ENCODE measurements at regions of chr12 and their contacts with region 1.

Region 1: DNA sequence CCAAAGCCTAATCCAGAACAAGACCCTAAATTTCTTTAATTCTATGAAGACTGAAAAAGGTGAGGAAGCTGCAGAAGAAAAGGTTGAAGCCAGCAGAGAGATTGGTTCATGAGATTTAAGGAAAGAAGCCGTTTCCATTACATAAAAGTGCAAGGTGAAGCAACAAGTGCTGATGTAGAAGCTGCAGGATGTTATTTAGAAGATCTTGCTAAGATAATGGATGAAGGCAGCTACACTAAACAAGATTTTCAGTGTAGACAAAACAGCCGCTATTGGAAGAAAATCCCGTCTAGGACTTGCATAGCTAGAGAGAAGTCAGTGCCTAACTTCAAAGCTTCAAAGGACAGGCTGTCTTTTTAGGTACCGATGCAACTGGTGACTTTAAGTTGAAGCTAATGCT is 65.4 kb upstream of the AMIGO2 start:
- DNase-seq: no peak
- H3K4me3 Mint-ChIP-seq: no peak overlapping the region
- H3K27ac Mint-ChIP-seq: no peak overlapping the region
- H3K4me1 Mint-ChIP-seq: peaks cover 29% of the 10 kb centered on the region
- H3K27me3 Mint-ChIP-seq: no peaks in the 10 kb centered on the region

Region 2: GRCh38 chr12:47121146-47121545 is 24.0 kb before region 1 on chr12:
- CTCF ChIA-PET with region 1: interaction called, 4 read pairs
- intact Hi-C with region 1: loop called (anchors 2 kb)
- DNase-seq: no peak
- H3K4me3 Mint-ChIP-seq: no peak overlapping the region
- H3K27ac Mint-ChIP-seq: peak overlapping the region; percentile 79
- H3K4me1 Mint-ChIP-seq: peaks cover 41% of the 10 kb centered on the region
- H3K27me3 Mint-ChIP-seq: no peaks in the 10 kb centered on the region

Region 3: GRCh38 chr12:47216150-47216677 is 71.0 kb after region 1 on chr12:
- CTCF ChIA-PET with region 1: no interaction called
- intact Hi-C with region 1: no loop called
- DNase-seq: peak; percentile 83
- H3K4me3 Mint-ChIP-seq: peak overlapping the region; percentile 94
- H3K27ac Mint-ChIP-seq: peak overlapping the region; percentile 100
- H3K4me1 Mint-ChIP-seq: peaks cover 12% of the 10 kb centered on the region
- H3K27me3 Mint-ChIP-seq: no peaks in the 10 kb centered on the region

Region 4: DNA sequence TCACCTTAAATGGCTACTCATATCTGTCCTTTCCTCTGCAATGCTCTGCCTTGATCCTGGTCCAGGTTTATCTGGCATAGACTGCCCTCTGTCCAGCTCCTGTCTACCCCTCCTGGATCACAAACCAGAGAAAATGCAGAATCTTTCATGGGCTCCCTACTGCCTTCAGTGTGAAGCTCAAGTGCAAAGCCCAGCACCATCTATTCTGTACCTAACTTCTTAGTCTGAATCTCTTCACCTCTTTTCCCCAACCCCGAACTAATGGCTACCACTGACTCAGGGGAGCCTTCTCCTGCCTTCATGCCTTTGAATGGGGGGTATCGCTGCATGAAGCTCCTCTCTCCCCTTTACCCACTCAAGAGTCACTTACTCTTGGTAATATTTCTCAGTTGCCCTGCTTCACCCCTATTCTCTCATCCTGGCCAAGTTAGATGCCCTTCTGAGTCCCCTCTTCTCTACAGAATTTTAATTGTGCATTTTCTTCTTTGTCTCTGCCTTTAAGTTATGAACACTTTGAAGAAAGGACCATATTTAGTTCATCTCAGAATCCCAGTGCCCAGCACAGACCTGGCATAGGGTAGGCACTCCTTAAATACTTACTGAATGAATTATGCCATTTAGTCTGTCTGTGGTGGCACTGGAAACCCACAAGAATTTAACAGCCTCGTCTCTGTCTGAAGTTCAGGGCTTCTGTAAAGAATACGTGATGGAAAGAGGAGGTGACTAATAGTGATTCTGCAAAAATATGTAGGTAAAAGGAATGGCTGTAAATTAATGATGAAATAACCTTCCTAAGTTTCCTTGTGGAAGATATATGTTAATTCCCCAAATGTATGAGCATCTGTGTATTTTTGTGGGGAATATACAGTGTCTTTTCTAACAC is 125.8 kb after region 1 on chr12:
- CTCF ChIA-PET with region 1: no interaction called
- intact Hi-C with region 1: no loop called
- DNase-seq: peak; percentile 63
- H3K4me3 Mint-ChIP-seq: peak overlapping the region; percentile 46
- H3K27ac Mint-ChIP-seq: peak overlapping the region; percentile 90
- H3K4me1 Mint-ChIP-seq: peaks cover 74% of the 10 kb centered on the region
- H3K27me3 Mint-ChIP-seq: no peaks in the 10 kb centered on the region

Region 5: GRCh38 chr12:47602325-47602724 is 457.1 kb after region 1 on chr12:
- CTCF ChIA-PET with region 1: no interaction called
- intact Hi-C with region 1: no loop called
- DNase-seq: no peak
- H3K4me3 Mint-ChIP-seq: no peak overlapping the region
- H3K27ac Mint-ChIP-seq: no peak overlapping the region
- H3K4me1 Mint-ChIP-seq: peaks cover 15% of the 10 kb centered on the region
- H3K27me3 Mint-ChIP-seq: no peaks in the 10 kb centered on the region

Measured in activated naive CD4-positive, alpha-beta T cell treated with anti-CD3 and anti-CD28 coated beads for 36 hours (primary cell).